GM10248 (cell line): ENCODE measurements at regions of chr9 and their contacts with region 1.

Region 1: DNA sequence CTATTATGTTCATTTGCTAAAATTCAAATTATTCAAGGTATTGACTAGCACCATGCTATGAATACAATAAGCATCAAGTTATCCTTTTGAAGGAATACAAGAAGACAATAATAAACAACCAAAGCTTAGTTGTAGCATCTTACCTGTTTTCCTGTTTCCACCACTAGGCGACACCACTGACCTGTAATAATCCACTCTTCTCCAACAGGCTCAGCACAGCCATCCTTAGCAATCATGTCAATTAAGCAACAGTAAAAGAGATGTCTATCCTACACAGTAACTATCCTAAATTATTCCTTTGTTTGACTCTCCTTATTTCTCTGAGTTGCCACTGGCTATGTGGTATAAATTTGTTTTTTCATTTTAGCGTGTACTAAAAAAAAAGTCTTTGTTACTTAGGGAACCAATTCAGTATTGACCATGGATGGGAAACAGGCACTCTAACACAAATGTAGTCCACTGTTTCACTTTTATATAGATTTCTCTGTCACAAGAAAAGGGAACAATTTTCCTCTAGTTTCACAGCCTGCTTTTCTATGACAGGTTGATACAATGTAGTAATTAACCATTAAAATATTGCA is 46.2 kb downstream of the PCA3 start:
- DNase-seq: peak; percentile 32
- CTCF ChIP-seq: peak; percentile 76

Region 2: GRCh38 chr9:76827286-76828080 is 17.0 kb after region 1 on chr9:
- CTCF ChIA-PET with region 1: interaction called, 21 read pairs
- POLR2A ChIA-PET with region 1: no interaction called
- DNase-seq: no peak
- CTCF ChIP-seq: no peak

Region 3: DNA sequence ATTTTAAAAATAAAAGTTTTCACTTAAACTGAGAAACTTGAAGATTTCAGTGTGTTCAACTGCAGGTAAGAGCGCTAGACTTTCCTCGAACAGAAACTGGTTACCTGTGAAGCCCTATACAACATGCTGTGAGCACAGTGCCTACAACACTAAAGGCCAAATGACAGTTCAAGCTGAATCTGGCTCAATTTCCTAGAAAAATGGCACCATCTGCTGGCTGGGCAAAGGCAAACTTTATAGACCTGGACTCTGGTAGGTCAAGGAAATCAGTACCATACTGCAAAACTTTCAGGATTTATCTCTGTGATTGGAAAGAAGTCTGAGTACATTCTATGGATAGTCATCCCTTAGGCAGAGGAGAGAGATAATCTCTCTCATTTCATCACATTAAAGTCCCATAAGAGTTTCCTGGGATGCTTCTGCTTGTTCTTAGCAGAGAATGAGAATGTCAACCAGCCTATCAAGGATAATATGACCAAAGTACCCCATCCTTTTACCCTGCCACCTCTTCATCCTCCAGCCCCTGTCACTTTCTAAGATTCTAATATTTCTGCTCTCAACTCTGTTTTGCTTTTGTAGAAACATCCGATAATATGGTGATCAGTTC is 177.2 kb after region 1 on chr9:
- CTCF ChIA-PET with region 1: interaction called, 27 read pairs
- POLR2A ChIA-PET with region 1: no interaction called
- DNase-seq: peak; percentile 39
- CTCF ChIP-seq: peak; percentile 53

Region 4: DNA sequence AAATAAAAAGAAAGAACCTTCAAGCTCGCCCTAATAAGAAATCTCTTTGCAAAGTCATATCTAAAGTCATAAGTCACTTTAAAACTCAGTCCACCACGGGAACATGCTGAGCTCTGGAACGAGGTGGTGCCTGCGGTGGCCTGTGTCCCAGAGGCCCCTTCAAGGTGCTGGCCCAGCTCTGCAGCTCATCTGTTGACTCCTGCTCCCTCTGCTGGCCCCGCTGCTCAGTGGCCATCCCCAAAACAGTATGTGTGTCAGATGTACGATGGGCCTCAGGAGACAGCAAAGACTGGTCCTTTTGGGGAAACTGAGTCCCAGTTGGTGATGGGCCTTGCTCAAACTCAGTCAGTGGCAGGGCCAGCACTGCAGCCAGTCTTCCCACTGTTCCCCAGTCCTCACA is 186.2 kb after region 1 on chr9:
- CTCF ChIA-PET with region 1: interaction called, 63 read pairs
- POLR2A ChIA-PET with region 1: no interaction called
- DNase-seq: peak; percentile 43
- CTCF ChIP-seq: peak; percentile 60

Region 5: DNA sequence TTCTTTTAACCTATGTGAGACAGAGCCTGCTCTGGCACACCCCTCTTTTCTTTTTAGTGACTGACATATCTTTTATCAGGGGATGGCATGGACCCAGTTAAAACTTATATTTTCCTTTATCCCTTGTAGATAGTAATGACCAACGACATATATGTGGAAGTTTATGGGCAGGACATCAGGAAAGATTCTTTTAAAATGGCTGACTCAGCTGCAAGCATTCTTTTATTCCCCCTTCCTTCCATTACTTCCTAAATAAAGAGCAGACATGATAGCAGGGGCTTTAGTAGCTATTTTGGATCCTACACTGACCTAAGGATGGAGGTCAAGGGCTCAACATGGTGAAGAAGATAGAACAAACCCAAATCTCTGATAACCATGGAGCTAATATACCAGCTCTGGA is 341.8 kb after region 1 on chr9:
- CTCF ChIA-PET with region 1: interaction called, 16 read pairs
- POLR2A ChIA-PET with region 1: no interaction called
- DNase-seq: no peak
- CTCF ChIP-seq: no peak

Region 6: DNA sequence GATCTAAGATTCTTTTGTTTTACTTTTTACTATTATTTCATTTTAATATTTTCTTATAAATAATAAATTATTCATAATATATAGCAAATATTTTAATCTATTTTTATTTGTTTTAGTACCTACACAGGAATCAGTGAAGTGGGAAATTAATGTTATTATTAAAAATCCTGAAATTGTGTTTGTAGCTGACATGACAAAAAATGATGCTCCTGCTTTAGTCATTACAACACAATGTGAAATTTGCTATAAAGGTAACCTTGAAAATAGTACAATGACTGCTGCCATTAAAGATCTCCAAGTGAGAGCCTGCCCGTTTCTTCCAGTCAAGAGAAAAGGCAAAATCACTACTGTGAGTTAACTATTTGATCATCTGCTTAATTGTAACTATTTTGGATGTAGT is 505.6 kb after region 1 on chr9:
- CTCF ChIA-PET with region 1: no interaction called
- POLR2A ChIA-PET with region 1: no interaction called
- DNase-seq: no peak
- CTCF ChIP-seq: no peak